Heart left ventricle (tissue), 16 donors: ENCODE measurements at regions of chr16 and their contacts with region 1.

Region 1: DNA sequence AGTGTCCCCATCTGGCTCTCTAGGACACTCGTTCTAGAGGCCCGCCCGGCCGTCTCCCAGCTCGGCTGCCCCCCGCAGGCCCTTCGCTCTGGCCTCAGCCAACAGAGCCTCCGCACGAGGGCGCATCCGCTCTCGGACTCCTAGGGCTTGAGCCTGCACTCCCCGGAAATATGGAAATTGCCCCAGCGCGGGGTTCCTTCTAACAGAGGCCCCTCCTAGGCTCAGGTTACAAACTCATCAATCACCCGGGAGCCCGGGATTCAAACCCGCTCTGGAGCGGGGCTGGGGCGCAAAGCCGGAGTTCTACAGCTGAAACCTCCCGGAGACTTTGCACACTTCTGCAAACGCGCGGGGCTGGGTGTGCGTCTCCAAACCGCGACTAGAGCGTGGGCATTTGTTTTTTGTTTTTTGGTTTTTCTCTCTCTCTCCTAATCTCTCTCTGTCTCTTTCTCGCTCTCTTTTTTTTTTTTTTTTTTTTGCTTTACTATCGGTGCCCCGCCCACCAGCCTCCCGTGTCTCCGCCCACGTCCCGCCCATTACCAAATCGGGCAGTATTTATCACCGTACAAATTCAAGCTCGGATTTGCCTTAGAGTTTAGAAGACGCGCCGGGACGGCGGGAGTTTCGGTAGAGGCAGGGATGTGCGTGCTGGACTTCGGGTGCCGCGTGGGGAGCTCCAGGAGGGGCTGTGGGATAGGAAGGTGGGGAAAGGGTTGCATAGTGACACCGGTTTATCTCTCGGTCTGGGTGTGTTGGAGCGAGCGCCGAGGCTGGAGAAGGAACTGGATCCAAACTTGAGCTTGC is 2.4 kb upstream of the FOXL1 start:
- DNase-seq: peak; percentile 80 to 90 (median 84)
- ATAC-seq: peak; percentile 77 to 86 (median 80)
- H3K4me3 ChIP-seq: peak overlapping the region; percentile 8 to 62 (median 47)
- H3K27ac ChIP-seq: peak overlapping the region; percentile 32 to 86 (median 68)
- H3K4me1 ChIP-seq: peaks cover 0 to 56% (median 11%) of the 10 kb centered on the region in 12 donors
- H3K27me3 ChIP-seq: peaks cover 28 to 98% (median 62%) of the 10 kb centered on the region in 9 donors
- CTCF ChIP-seq: peak; percentile 32 to 80 (median 57)
- POLR2A ChIP-seq: peak in 1 of 2 donors; percentile 71

Region 2: DNA sequence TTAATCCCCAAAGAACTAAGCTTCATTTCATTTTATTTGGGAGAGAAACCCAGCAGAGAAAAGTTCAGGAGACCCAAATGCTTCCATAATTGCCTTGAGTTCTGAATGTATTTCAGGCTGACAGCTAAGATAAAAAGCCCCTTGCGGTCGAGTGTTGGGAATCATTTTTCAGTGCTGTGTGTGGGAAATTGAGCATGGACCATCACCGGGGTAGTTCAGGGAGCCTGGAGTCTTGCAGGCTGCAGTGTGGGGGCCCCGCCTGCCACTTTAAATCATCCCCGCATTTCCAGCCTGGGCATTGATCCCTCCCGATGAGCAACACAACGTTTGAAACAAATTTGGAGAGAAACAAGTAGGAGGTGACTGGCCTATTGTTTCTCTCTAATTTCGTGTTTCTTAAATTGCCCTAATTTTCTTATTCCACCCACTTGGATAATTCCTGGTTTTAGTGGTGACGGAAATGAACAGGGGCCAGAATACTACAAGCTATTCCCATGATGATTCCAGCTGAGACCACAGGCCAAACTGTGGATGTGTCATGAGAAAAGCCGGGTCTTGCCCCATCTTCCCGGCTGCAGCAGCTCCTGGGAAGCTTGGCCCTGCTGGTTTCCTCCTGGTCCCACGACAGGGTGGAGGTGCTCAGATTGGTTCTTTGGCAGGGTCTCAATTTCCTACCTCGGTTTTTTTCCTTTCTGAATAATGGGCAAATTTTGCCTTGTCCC is 77.5 kb after region 1 on chr16:
- intact Hi-C with region 1: loop called in 1 of 10 experiments (anchors 10 kb)
- DNase-seq: peak in 2 of 5 donors; percentile 47 to 56
- ATAC-seq: peak in 3 of 4 donors; percentile 58 to 86 (median 63)
- H3K4me3 ChIP-seq: no peak overlapping the region
- H3K27ac ChIP-seq: peak overlapping the region in 11 of 12 donors; percentile 5 to 69 (median 57)
- H3K4me1 ChIP-seq: peaks cover 0 to 21% (median 2%) of the 10 kb centered on the region in 12 donors
- H3K27me3 ChIP-seq: peaks cover 0 to 3% (median 0%) of the 10 kb centered on the region in 9 donors
- CTCF ChIP-seq: peak in 1 of 12 donors; percentile 2
- POLR2A ChIP-seq: no peak

Region 3: GRCh38 chr16:86669937-86670749 is 94.2 kb after region 1 on chr16:
- intact Hi-C with region 1: loop called in 6 of 10 experiments (anchors 2 to 10 kb)
- DNase-seq: peak in 3 of 5 donors; percentile 46 to 71 (median 71)
- ATAC-seq: peak in 2 of 4 donors; percentile 11 to 25
- H3K4me3 ChIP-seq: no peak overlapping the region
- H3K27ac ChIP-seq: peak overlapping the region; percentile 36 to 76 (median 56)
- H3K4me1 ChIP-seq: peaks cover 0 to 48% (median 12%) of the 10 kb centered on the region in 12 donors
- H3K27me3 ChIP-seq: peaks cover 0 to 45% (median 5%) of the 10 kb centered on the region in 9 donors
- CTCF ChIP-seq: no peak
- POLR2A ChIP-seq: no peak

Region 4: GRCh38 chr16:86751076-86752030 is 175.4 kb after region 1 on chr16:
- intact Hi-C with region 1: loop called in 6 of 10 experiments (anchors 5 to 10 kb)
- DNase-seq: no peak
- ATAC-seq: no peak
- H3K4me3 ChIP-seq: no peak overlapping the region
- H3K27ac ChIP-seq: no peak overlapping the region
- H3K4me1 ChIP-seq: peaks cover 0 to 11% (median 0%) of the 10 kb centered on the region in 12 donors
- H3K27me3 ChIP-seq: peaks cover 0 to 3% (median 0%) of the 10 kb centered on the region in 9 donors
- CTCF ChIP-seq: no peak
- POLR2A ChIP-seq: no peak

Region 5: DNA sequence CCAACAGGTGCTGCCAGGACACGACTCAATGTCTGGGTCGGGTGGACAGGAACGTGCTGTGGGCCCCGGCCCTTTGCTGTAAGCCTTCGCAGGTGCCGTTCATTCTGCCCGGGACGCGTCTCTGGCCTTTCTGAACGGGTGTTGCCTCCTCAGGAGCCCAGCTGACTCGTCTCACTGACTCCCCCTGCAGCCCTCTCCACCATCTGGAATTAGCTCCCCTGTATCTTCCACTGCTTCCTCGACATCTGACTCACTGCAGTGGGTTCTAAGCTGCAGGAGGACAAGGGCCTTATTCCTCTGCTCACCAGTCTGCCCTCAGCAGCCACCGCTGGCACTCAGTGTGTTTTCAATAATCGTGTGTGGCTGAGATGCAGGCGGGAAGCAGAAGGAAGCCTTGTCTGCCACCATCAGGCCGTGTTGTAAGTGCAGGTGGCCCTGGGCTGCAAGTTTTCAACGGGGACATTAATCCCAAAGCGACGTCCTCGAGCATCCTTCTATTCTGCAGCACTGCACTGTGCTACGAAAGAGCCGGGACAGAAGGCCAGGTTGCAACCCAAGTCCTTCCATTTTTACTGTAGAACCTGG is 258.6 kb after region 1 on chr16:
- intact Hi-C with region 1: loop called in 1 of 10 experiments (anchors 10 kb)
- DNase-seq: peak in 1 of 5 donors; percentile 44
- ATAC-seq: peak in 2 of 4 donors; percentile 17 to 35
- H3K4me3 ChIP-seq: no peak overlapping the region
- H3K27ac ChIP-seq: no peak overlapping the region
- H3K4me1 ChIP-seq: peaks cover 0 to 11% (median 3%) of the 10 kb centered on the region in 12 donors
- H3K27me3 ChIP-seq: no peaks in the 10 kb centered on the region
- CTCF ChIP-seq: peak in 3 of 12 donors; percentile 18 to 30 (median 22)
- POLR2A ChIP-seq: no peak